ENCODE measurements at regions of chr13 and their contacts with region 1.

Region 1: DNA sequence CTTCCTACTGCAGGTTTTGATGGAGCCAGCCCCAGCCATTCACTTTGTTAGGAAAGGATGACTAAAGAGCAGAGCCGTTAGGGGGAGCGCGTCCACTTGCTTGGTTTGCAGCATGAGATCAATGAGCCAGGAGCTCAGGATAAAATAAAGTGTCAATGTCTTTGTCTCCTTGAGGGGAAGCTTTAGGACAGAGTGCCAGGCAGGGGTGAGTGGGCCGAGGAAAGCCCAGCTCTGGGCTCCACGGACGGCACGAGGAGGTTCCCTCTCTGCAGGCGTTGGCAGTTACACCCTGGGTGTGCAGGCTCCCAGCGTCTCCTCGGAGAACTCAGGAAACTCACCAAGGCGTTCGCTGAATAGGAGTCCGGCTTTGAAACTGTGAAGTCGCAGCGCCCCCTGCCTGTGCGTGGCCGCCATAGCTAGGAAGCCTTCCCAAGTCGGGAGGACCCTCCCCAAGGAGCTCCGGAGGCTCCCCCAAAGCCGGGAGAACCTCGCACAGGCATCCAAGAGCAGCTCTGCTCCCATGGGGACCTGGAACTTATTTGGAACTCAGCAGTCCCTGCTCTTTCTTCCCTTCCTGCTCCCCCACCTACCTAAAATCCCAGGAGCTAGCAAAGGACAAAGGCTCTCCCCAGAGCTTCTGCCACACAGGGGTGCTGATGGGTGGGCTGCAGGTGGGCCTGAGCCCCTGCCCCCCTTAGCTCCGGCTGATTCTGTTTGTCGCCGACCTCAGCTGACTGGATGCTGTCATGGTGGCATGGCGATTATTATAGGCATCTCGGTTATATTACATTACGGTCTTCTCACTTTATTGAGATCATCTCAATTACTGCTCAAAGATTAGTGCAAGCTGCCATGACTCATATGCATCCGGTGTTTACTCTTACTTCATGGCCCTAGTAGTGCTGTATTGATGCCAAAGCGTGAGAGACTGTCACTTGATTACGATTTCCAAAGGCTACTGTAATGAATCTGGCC is 34.4 kb downstream of the GSX1 start:
- DNase-seq: peak; percentile 77 to 91
- H3K4me3 ChIP-seq: peak overlapping the region; percentile 16
- H3K4me1 ChIP-seq: no peaks in the 10 kb centered on the region; the same call in 1 of the 2 replicates
- H3K27me3 ChIP-seq: no peaks in the 10 kb centered on the region

Region 2: GRCh38 chr13:26971990-26972887 is 854.4 kb before region 1 on chr13:
- in situ Hi-C with region 1: loop called (anchors 25 kb)
- DNase-seq: peak in 1 of 2 experiments; percentile 49
- H3K4me3 ChIP-seq: no peak overlapping the region
- H3K4me1 ChIP-seq: no peaks in the 10 kb centered on the region
- H3K27me3 ChIP-seq: no peaks in the 10 kb centered on the region

Region 3: GRCh38 chr13:27374650-27375049 is 452.0 kb before region 1 on chr13:
- in situ Hi-C with region 1: loop called (anchors 5 kb)
- DNase-seq: peak; percentile 74 to 76
- H3K4me3 ChIP-seq: no peak overlapping the region
- H3K4me1 ChIP-seq: no peaks in the 10 kb centered on the region
- H3K27me3 ChIP-seq: peaks cover 4% of the 10 kb centered on the region; the same call in 1 of the 2 replicates

Region 4: DNA sequence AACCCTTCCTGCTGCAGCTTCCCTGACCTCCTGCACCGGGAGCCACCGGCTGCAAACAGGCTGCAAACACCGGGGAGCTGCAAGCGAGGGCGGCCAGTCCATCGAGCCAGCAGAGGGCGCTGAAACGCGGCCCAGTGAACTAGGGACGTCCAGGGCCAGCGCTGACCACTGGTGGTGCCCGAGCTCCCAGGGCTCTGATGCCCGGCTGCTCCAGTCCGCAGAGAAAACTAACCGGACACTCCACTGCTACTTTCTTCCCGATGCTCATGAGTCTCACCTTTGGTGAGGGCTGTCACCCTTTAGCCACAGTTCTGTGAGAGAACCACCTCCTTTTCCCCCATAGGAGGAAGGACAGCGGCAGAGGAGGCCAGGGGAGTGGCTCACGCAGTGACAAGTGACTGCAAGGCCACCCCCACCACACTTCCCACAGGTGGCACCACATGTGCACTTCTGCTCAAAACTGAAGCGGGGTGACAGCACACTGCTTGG is 293.5 kb before region 1 on chr13:
- in situ Hi-C with region 1: loop called (anchors 10 kb)
- DNase-seq: peak; percentile 22 to 86
- H3K4me3 ChIP-seq: no peak overlapping the region
- H3K4me1 ChIP-seq: no peaks in the 10 kb centered on the region
- H3K27me3 ChIP-seq: no peaks in the 10 kb centered on the region

Region 5: GRCh38 chr13:27953676-27954405 is 127.2 kb after region 1 on chr13:
- in situ Hi-C with region 1: loop called (anchors 10 kb)
- DNase-seq: peak; percentile 69 to 88
- H3K4me3 ChIP-seq: peak overlapping the region; percentile 37
- H3K4me1 ChIP-seq: no peaks in the 10 kb centered on the region; the same call in 1 of the 2 replicates
- H3K27me3 ChIP-seq: no peaks in the 10 kb centered on the region

Region 6: GRCh38 chr13:27980280-27980998 is 153.8 kb after region 1 on chr13:
- in situ Hi-C with region 1: loop called (anchors 10 kb)
- DNase-seq: no peak
- H3K4me3 ChIP-seq: no peak overlapping the region
- H3K4me1 ChIP-seq: no peaks in the 10 kb centered on the region
- H3K27me3 ChIP-seq: peaks cover 3% of the 10 kb centered on the region; the same call in 1 of the 2 replicates